ENCODE measurements at regions of chr9 and their contacts with region 1.

Region 1: GRCh38 chr9:124861342-124862229 is at the starts of genes ARPC5L and RPL35:
- DNase-seq: peak; percentile 91 to 97 (median 95)
- ATAC-seq: peak; percentile 98
- H3K4me3 ChIP-seq: peak within 1 kb of the TSS; percentile 88
- H3K4me3 Mint-ChIP-seq: peak within 1 kb of the TSS; percentile 89 to 99 (median 95)
- H3K27ac ChIP-seq: peak within 1 kb of the TSS; percentile 87
- H3K27ac Mint-ChIP-seq: peak within 1 kb of the TSS; percentile 91 to 99 (median 96)
- H3K4me1 ChIP-seq: peaks cover 7 to 16% of the 10 kb centered on the region in 2 donors
- H3K4me1 Mint-ChIP-seq: peaks cover 7 to 36% (median 29%) of the 10 kb centered on the region in 7 donors
- H3K27me3 ChIP-seq: no peaks in the 10 kb centered on the region
- H3K27me3 Mint-ChIP-seq: no peaks in the 10 kb centered on the region
- total RNA-seq, gene ARPC5L: 20.0 to 66.1 (median 33.1) TPM
- total RNA-seq, gene RPL35: 1,415 to 1,987 (median 1,778) TPM

Region 2: GRCh38 chr9:124415102-124415851 is 446.3 kb before region 1 on chr9 and contains the start of gene PSMB7:
- CTCF ChIA-PET with region 1: no interaction called
- POLR2A ChIA-PET with region 1: no interaction called
- intact Hi-C with region 1: loop called in 1 of 2 experiments (anchors 10 kb)
- DNase-seq: peak; percentile 91 to 97 (median 96)
- ATAC-seq: peak; percentile 99
- H3K4me3 ChIP-seq: peak within 1 kb of the TSS; percentile 75
- H3K4me3 Mint-ChIP-seq: peak within 1 kb of the TSS; percentile 93 to 99 (median 97)
- H3K27ac ChIP-seq: peak within 1 kb of the TSS; percentile 78
- H3K27ac Mint-ChIP-seq: peak within 1 kb of the TSS; percentile 82 to 98 (median 94)
- H3K4me1 ChIP-seq: peaks cover 13 to 18% of the 10 kb centered on the region in 2 donors
- H3K4me1 Mint-ChIP-seq: peaks cover 16 to 46% (median 39%) of the 10 kb centered on the region in 7 donors
- H3K27me3 ChIP-seq: no peaks in the 10 kb centered on the region
- H3K27me3 Mint-ChIP-seq: no peaks in the 10 kb centered on the region
- total RNA-seq, gene PSMB7: 59.4 to 129 (median 63.2) TPM

Region 3: GRCh38 chr9:124960409-124960752 is 98.8 kb after region 1 on chr9:
- CTCF ChIA-PET with region 1: no interaction called
- POLR2A ChIA-PET with region 1: interaction called, 14 read pairs
- intact Hi-C with region 1: no loop called
- DNase-seq: no peak
- ATAC-seq: no peak
- H3K4me3 ChIP-seq: no peak overlapping the region
- H3K4me3 Mint-ChIP-seq: no peak overlapping the region
- H3K27ac ChIP-seq: no peak overlapping the region
- H3K27ac Mint-ChIP-seq: no peak overlapping the region
- H3K4me1 ChIP-seq: peaks cover 12 to 21% of the 10 kb centered on the region in 2 donors
- H3K4me1 Mint-ChIP-seq: peaks cover 12 to 19% (median 19%) of the 10 kb centered on the region in 7 donors
- H3K27me3 ChIP-seq: no peaks in the 10 kb centered on the region
- H3K27me3 Mint-ChIP-seq: no peaks in the 10 kb centered on the region

Region 4: DNA sequence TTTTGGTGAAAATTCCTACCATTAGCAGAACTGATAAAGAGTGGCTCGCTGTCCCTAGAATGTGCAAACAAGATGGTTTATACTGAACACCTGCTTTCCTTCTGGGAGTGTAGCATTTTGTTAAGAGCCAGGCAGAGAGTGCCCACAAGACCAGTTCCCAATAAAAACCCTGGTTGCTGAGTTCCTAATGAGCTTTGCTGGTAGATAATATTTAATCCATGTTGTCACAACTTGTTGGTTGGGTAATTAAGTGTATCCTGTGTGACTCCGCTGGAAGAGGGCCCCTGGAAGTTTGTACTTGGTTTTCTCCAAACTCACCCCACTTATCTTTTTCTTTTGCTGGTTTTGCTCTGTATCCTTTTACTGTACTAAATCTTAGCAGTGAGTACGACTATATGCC is 118.8 kb after region 1 on chr9:
- CTCF ChIA-PET with region 1: no interaction called
- POLR2A ChIA-PET with region 1: no interaction called
- intact Hi-C with region 1: no loop called
- DNase-seq: no peak
- ATAC-seq: no peak
- H3K4me3 ChIP-seq: no peak overlapping the region
- H3K4me3 Mint-ChIP-seq: no peak overlapping the region
- H3K27ac ChIP-seq: no peak overlapping the region
- H3K27ac Mint-ChIP-seq: peak overlapping the region in 1 of 9 donors; percentile 56
- H3K4me1 ChIP-seq: no peaks in the 10 kb centered on the region
- H3K4me1 Mint-ChIP-seq: no peaks in the 10 kb centered on the region
- H3K27me3 ChIP-seq: no peaks in the 10 kb centered on the region
- H3K27me3 Mint-ChIP-seq: no peaks in the 10 kb centered on the region

Region 5: DNA sequence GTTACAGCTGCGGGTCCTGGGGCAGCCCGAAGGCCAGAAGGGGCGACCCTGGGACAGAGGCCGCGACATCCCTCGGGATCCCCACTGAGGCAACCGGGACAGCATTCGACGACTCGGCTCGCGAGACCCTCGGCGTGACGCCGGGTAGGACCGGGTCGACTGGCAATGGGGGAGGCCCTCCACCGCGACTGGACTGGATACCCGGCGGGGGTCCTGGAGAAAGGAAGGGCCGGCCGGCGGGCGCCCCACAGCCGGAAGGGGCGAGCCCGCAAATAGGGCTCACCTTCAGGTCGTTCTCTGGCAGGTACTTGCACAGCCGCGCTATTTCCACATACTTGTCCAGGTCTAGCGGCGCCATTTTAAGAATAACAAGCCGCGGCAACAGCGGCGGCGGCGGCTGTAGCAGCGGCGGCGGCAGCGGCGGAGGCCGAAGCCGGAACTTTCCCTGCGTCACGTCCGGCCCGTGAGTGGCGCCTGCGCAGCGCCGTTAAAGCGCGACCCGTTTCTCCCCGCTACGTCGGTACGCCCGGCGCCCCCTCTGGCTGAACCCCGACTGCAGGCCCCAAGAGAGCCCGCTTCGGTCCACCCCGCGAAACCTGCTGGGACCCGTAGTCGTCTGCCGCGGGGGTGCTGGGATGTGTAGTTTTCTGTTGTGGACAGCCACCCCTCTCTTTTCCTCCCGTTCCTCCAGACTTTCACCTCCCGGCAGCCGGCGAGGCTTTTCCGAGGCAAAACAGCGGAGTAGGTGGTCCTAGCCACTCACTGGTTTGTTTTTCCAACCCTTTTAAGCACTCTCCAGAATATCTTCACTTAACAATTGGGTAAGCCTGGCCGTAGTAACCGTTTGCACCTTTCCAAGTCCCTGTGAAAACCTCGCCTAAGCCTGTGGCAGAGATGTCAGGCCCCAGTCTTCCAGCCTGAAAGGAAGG is 328.0 kb after region 1 on chr9 and contains the start of gene PPP6C:
- CTCF ChIA-PET with region 1: no interaction called
- POLR2A ChIA-PET with region 1: no interaction called
- intact Hi-C with region 1: loop called (anchors 2 kb)
- DNase-seq: peak; percentile 92 to 97 (median 96)
- ATAC-seq: peak; percentile 98
- H3K4me3 ChIP-seq: peak within 1 kb of the TSS; percentile 99
- H3K4me3 Mint-ChIP-seq: peak within 1 kb of the TSS; percentile 89 to 99 (median 96)
- H3K27ac ChIP-seq: peak within 1 kb of the TSS; percentile 98
- H3K27ac Mint-ChIP-seq: peak within 1 kb of the TSS; percentile 90 to 97 (median 95)
- H3K4me1 ChIP-seq: peaks cover 35 to 51% of the 10 kb centered on the region in 2 donors
- H3K4me1 Mint-ChIP-seq: peaks cover 35 to 79% (median 57%) of the 10 kb centered on the region in 7 donors
- H3K27me3 ChIP-seq: no peaks in the 10 kb centered on the region
- H3K27me3 Mint-ChIP-seq: peaks cover 0 to 4% (median 0%) of the 10 kb centered on the region in 5 donors
- total RNA-seq, gene PPP6C: 32.9 to 54.2 (median 49.5) TPM

Region 6: GRCh38 chr9:125261501-125262293 is 400.1 kb after region 1 on chr9 and contains the start of gene GAPVD1:
- CTCF ChIA-PET with region 1: no interaction called
- POLR2A ChIA-PET with region 1: no interaction called
- intact Hi-C with region 1: loop called in 1 of 2 experiments (anchors 2 kb)
- DNase-seq: peak; percentile 83 to 95 (median 89)
- ATAC-seq: peak; percentile 97
- H3K4me3 ChIP-seq: peak within 1 kb of the TSS; percentile 97
- H3K4me3 Mint-ChIP-seq: peak within 1 kb of the TSS; percentile 82 to 99 (median 98)
- H3K27ac ChIP-seq: peak within 1 kb of the TSS; percentile 94
- H3K27ac Mint-ChIP-seq: peak within 1 kb of the TSS; percentile 83 to 99 (median 94)
- H3K4me1 ChIP-seq: peaks cover 8 to 24% of the 10 kb centered on the region in 2 donors
- H3K4me1 Mint-ChIP-seq: peaks cover 21 to 48% (median 42%) of the 10 kb centered on the region in 7 donors
- H3K27me3 ChIP-seq: no peaks in the 10 kb centered on the region
- H3K27me3 Mint-ChIP-seq: no peaks in the 10 kb centered on the region
- total RNA-seq, gene GAPVD1: 57.3 to 68.9 (median 65.0) TPM

Region 7: GRCh38 chr9:126375386-126375785 is 1513.8 kb after region 1 on chr9:
- CTCF ChIA-PET with region 1: no interaction called
- POLR2A ChIA-PET with region 1: no interaction called
- intact Hi-C with region 1: no loop called
- DNase-seq: no peak
- ATAC-seq: peak; percentile 48
- H3K4me3 ChIP-seq: no peak overlapping the region
- H3K4me3 Mint-ChIP-seq: peak overlapping the region in 1 of 10 donors; percentile 21
- H3K27ac ChIP-seq: no peak overlapping the region
- H3K27ac Mint-ChIP-seq: no peak overlapping the region
- H3K4me1 ChIP-seq: no peaks in the 10 kb centered on the region
- H3K4me1 Mint-ChIP-seq: peaks cover 12 to 22% (median 14%) of the 10 kb centered on the region in 7 donors
- H3K27me3 ChIP-seq: no peaks in the 10 kb centered on the region
- H3K27me3 Mint-ChIP-seq: peaks cover 0 to 12% (median 0%) of the 10 kb centered on the region in 5 donors

Region 8: GRCh38 chr9:126804696-126805545 is 1943.3 kb after region 1 on chr9 and contains the start of gene ZBTB43:
- CTCF ChIA-PET with region 1: no interaction called
- POLR2A ChIA-PET with region 1: no interaction called
- intact Hi-C with region 1: loop called in 1 of 2 experiments (anchors 10 kb)
- DNase-seq: peak; percentile 95 to 98 (median 98)
- ATAC-seq: peak; percentile 90
- H3K4me3 ChIP-seq: peak within 1 kb of the TSS; percentile 72
- H3K4me3 Mint-ChIP-seq: peak within 1 kb of the TSS; percentile 81 to 99 (median 97)
- H3K27ac ChIP-seq: peak within 1 kb of the TSS; percentile 83
- H3K27ac Mint-ChIP-seq: peak within 1 kb of the TSS; percentile 91 to 99 (median 95)
- H3K4me1 ChIP-seq: peaks cover 10 to 17% of the 10 kb centered on the region in 2 donors
- H3K4me1 Mint-ChIP-seq: peaks cover 32 to 50% (median 41%) of the 10 kb centered on the region in 7 donors
- H3K27me3 ChIP-seq: no peaks in the 10 kb centered on the region
- H3K27me3 Mint-ChIP-seq: peaks cover 0 to 3% (median 0%) of the 10 kb centered on the region in 5 donors
- total RNA-seq, gene ZBTB43: 17.8 to 31.4 (median 28.2) TPM

Measured in naive thymus-derived CD4-positive, alpha-beta T cell (primary cell).